ENCODE measurements at regions of chrX and their contacts with region 1.

Region 1: GRCh38 chrX:65985922-65986588 is 53.8 kb downstream of the VSIG4 start:
- DNase-seq: no peak

Region 2: GRCh38 chrX:65595460-65595876 is 390.6 kb before region 1 on chrX:
- intact Hi-C with region 1: loop called (anchors 1 kb)
- DNase-seq: peak in 9 of 10 donors; percentile 45 to 95 (median 82)

Region 3: GRCh38 chrX:66602381-66602938 is 616.4 kb after region 1 on chrX:
- intact Hi-C with region 1: no loop called
- DNase-seq: peak in 3 of 10 donors; percentile 2 to 25 (median 21)

Measured in posterior cingulate gyrus (tissue), 11 donors.